ENCODE measurements at regions of chr3 and their contacts with region 1.

Region 1: GRCh38 chr3:46368569-46368968 is 2.2 kb upstream of the CCR5 start:
- DNase-seq: peak; percentile 80
- H3K4me3 Mint-ChIP-seq: no peak overlapping the region
- H3K27ac Mint-ChIP-seq: peak overlapping the region; percentile 55
- H3K4me1 Mint-ChIP-seq: peaks cover 69% of the 10 kb centered on the region
- H3K27me3 Mint-ChIP-seq: peaks cover 15% of the 10 kb centered on the region

Region 2: DNA sequence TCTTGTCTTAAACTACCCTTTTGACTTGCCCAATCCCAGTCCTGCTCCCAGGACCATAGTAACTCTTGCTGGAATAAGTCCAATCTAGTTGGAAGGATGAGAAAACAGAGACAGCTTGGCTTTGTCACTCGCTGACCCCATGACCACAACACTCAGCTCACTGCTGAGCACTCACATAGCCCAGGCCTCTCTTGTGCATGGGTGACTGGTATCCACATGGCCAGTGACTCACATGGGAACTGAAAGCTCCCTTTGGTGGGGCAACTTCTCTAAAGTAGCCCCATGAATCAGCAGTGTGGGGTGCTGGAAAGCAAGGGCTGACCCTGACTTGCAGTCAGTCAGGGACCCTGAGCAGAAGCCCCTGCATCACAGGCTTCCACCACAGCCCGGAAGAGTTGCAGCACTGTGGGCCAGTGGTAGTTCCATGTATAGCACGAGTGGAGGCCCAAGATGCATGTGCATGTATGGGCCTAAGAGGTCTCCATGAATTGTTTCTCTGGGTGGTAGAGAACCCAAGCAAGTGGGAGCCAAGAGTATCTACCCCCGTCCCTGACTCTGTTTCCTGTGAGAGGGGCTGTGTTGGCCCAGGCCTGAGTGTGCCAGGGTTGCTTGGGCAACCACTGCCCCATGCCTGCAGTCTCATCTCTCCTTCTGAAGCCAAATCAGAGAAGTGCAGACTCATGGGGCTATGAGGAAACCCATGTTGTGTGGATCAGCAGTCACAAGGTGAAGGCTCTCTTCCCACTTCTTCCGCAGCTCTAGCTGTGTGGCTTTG is 279.1 kb before region 1 on chr3:
- CTCF ChIA-PET with region 1: interaction called, 92 read pairs
- DNase-seq: peak; percentile 25
- H3K4me3 Mint-ChIP-seq: no peak overlapping the region
- H3K27ac Mint-ChIP-seq: no peak overlapping the region
- H3K4me1 Mint-ChIP-seq: peaks cover 40% of the 10 kb centered on the region
- H3K27me3 Mint-ChIP-seq: peaks cover 16% of the 10 kb centered on the region

Region 3: DNA sequence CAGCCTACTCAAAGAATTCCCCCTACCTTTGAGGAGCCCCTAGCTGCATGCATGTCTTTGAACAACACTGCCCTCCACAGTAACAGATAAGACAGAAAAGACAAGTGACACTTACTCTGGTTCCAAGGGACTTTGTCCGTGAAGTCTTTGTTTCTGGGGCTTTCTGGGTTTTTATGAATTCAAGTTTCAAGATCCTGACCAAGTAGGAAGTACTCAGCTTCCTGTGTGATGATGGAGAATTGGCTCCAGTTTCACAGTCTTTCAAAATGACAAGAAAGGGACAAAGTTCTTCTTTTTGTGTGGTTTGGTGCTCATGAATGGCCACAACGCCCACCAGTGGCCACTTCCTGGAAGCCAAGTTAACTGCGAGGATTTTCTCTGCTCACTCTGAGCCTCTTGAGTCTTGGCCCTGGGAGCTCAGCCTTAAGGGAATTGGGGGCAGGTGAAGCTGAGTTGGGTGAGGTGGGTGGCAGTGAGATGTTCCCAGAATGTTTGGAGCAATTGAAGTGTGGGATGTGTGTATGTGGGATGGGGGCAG is 160.3 kb before region 1 on chr3 and contains the start of gene CCR1:
- CTCF ChIA-PET with region 1: interaction called, 228 read pairs
- DNase-seq: peak; percentile 75
- H3K4me3 Mint-ChIP-seq: peak within 1 kb of the TSS; percentile 51
- H3K27ac Mint-ChIP-seq: peak within 1 kb of the TSS; percentile 81
- H3K4me1 Mint-ChIP-seq: peaks cover 52% of the 10 kb centered on the region
- H3K27me3 Mint-ChIP-seq: peaks cover 12% of the 10 kb centered on the region

Region 4: GRCh38 chr3:46252980-46253379 is 115.6 kb before region 1 on chr3:
- CTCF ChIA-PET with region 1: no interaction called
- DNase-seq: no peak
- H3K4me3 Mint-ChIP-seq: no peak overlapping the region
- H3K27ac Mint-ChIP-seq: no peak overlapping the region
- H3K4me1 Mint-ChIP-seq: no peaks in the 10 kb centered on the region
- H3K27me3 Mint-ChIP-seq: peaks cover 60% of the 10 kb centered on the region

Region 5: GRCh38 chr3:46276502-46277099 is 92.0 kb before region 1 on chr3:
- CTCF ChIA-PET with region 1: interaction called, 161 read pairs
- DNase-seq: peak; percentile 83
- H3K4me3 Mint-ChIP-seq: no peak overlapping the region
- H3K27ac Mint-ChIP-seq: peak overlapping the region; percentile 17
- H3K4me1 Mint-ChIP-seq: peaks cover 56% of the 10 kb centered on the region
- H3K27me3 Mint-ChIP-seq: peaks cover 23% of the 10 kb centered on the region

Region 6: DNA sequence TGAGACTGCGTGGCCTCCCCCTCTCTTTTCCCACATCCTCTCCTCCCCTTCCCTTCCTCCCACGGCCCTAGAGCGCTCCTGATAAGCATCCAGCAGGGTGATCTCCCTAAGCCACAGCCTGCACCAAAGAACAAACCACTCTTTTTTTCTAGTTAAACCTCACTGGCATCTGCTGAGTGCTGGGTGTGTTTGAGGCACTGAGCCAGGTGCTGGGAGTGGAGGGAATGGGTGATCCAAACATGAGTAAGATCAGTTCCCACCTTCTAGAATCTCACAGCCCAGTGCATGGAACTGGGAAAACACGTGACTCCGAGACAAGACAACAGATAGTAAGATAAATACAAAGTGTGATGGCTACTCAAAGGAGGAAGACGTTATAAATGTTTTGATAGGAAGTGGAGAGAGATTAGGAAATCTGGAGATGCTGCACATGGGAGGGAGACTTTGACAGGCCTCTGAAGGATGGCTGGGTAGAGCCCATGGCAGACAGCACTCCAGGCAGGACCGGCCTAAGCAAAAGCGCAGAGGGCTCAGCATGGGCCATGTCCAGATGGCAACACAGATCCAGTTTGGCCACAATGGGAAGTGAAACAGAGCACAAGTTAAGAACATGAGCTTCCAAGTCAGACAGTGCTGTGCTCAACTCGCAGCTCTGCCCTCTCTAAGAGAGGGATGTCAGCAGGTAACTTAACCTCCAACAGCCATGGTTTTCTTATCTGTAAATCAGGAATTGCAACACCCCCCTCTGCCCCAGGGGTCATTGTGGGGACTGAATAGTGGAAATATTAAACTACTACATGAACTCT is 70.7 kb before region 1 on chr3:
- CTCF ChIA-PET with region 1: interaction called, 55 read pairs
- DNase-seq: no peak
- H3K4me3 Mint-ChIP-seq: peak overlapping the region; percentile 17
- H3K27ac Mint-ChIP-seq: peak overlapping the region; percentile 92
- H3K4me1 Mint-ChIP-seq: peaks cover 93% of the 10 kb centered on the region
- H3K27me3 Mint-ChIP-seq: no peaks in the 10 kb centered on the region

Region 7: GRCh38 chr3:46642971-46643370 is 274.4 kb after region 1 on chr3:
- CTCF ChIA-PET with region 1: no interaction called
- DNase-seq: no peak
- H3K4me3 Mint-ChIP-seq: no peak overlapping the region
- H3K27ac Mint-ChIP-seq: no peak overlapping the region
- H3K4me1 Mint-ChIP-seq: no peaks in the 10 kb centered on the region
- H3K27me3 Mint-ChIP-seq: peaks cover 37% of the 10 kb centered on the region